Activated naive CD4-positive, alpha-beta T cell treated with anti-CD3 and anti-CD28 coated beads, Interleukin-2, amount 10 ng/mL, durations not matched to agents 7 days and 5 days (primary cell): ENCODE measurements at regions of chr1 and their contacts with region 1.

Region 1: GRCh38 chr1:204128964-204129896 is 22.6 kb downstream of the ETNK2 start:
- DNase-seq: peak; percentile 73
- H3K4me3 Mint-ChIP-seq: no peak overlapping the region
- H3K27ac Mint-ChIP-seq: no peak overlapping the region
- H3K4me1 Mint-ChIP-seq: peaks cover 5% of the 10 kb centered on the region
- H3K27me3 Mint-ChIP-seq: peaks cover 8% of the 10 kb centered on the region

Region 2: GRCh38 chr1:203861379-203862184 is 267.6 kb before region 1 on chr1 and contains the start of gene SNRPE:
- CTCF ChIA-PET with region 1: interaction called, 53 read pairs
- DNase-seq: peak; percentile 97
- H3K4me3 Mint-ChIP-seq: peak within 1 kb of the TSS; percentile 97
- H3K27ac Mint-ChIP-seq: peak within 1 kb of the TSS; percentile 92
- H3K4me1 Mint-ChIP-seq: peaks cover 25% of the 10 kb centered on the region
- H3K27me3 Mint-ChIP-seq: no peaks in the 10 kb centered on the region

Region 3: GRCh38 chr1:203871107-203871875 is 257.9 kb before region 1 on chr1:
- CTCF ChIA-PET with region 1: interaction called, 61 read pairs
- DNase-seq: peak; percentile 29
- H3K4me3 Mint-ChIP-seq: no peak overlapping the region
- H3K27ac Mint-ChIP-seq: no peak overlapping the region
- H3K4me1 Mint-ChIP-seq: no peaks in the 10 kb centered on the region
- H3K27me3 Mint-ChIP-seq: no peaks in the 10 kb centered on the region